H1 (cell line): ENCODE measurements at regions of chr1 and their contacts with region 1.

Region 1: GRCh38 chr1:162612606-162613400 is 19.5 kb upstream of the DDR2 start:
- DNase-seq: no peak
- H3K4me3 ChIP-seq: no peak overlapping the region
- H3K27ac ChIP-seq: no peak overlapping the region
- H3K4me1 ChIP-seq: no peaks in the 10 kb centered on the region
- H3K27me3 ChIP-seq: no peaks in the 10 kb centered on the region
- CTCF ChIP-seq: no peak
- EP300 ChIP-seq: no peak
- POLR2A ChIP-seq: no peak
- RAD21 ChIP-seq: no peak

Region 2: GRCh38 chr1:162599451-162599850 is 13.4 kb before region 1 on chr1:
- CTCF ChIA-PET with region 1: interaction called, 28 read pairs
- POLR2A ChIA-PET with region 1: interaction called, 4 read pairs
- DNase-seq: no peak
- H3K4me3 ChIP-seq: no peak overlapping the region
- H3K27ac ChIP-seq: no peak overlapping the region
- H3K4me1 ChIP-seq: no peaks in the 10 kb centered on the region
- H3K27me3 ChIP-seq: no peaks in the 10 kb centered on the region
- CTCF ChIP-seq: no peak
- EP300 ChIP-seq: no peak
- POLR2A ChIP-seq: no peak
- RAD21 ChIP-seq: no peak

Region 3: DNA sequence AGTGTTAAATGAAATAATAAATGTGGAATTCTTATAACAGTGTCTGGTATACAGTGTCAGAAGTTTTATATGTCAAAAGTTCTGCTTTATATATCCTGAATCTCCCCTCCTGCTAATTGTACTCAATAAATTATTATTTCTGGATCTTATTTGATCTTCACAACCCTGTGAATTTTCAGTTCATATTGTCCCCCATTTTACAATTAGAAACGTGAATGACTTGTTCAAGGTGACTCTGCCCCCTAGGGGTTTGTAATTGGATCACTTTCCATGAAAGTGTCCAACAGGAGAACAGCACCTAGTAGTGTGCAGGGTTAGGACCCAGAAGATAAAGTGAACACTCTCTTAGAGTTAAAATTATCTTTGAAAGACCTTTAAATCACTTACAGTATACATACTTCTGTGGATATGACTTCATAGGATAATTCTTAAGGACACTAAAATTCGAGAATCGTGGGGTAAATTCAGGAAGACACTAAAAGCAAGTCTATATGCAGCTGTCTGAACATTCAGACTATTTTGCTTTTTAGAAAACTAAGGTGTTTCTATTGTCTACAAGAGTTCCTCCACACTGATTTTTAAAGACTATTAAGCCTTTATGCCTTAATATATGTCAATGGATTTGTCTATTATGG is 15.0 kb after region 1 on chr1:
- CTCF ChIA-PET with region 1: interaction called, 47 read pairs
- POLR2A ChIA-PET with region 1: no interaction called
- DNase-seq: no peak
- H3K4me3 ChIP-seq: no peak overlapping the region
- H3K27ac ChIP-seq: no peak overlapping the region
- H3K4me1 ChIP-seq: no peaks in the 10 kb centered on the region
- H3K27me3 ChIP-seq: no peaks in the 10 kb centered on the region
- CTCF ChIP-seq: peak in 2 of 3 experiments; percentile 22 to 46; a peak in 2 of 4 replicates
- EP300 ChIP-seq: no peak
- POLR2A ChIP-seq: no peak
- RAD21 ChIP-seq: peak; percentile 47 to 51

Region 4: DNA sequence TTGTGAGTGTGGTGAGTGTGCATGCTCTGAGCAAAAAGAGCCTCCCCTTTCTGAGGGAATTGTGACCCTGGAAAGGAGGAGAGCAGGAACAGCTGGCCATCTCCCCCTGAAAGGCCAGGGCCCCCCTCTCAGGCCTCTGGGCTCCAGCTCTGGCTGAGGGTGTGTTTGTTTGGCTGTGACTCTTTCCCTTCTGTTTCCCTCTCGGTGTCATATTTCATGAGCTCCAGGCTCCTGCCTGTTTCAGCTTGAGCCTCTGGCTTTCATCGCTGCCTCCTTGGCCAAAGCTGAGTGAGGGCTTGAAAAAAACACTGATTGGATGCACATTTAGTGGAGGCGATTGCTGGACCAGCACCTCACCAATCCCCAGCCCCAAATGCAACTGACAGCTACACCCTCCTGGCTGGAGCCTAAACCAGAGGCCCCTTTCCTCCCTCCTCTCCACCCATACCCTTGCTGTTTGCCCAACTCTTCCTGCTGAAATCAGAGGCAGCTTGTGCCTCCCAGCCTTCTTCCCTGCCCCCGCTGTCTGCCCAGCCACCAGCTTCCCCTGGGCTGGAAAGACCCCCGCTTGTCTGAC is 83.6 kb after region 1 on chr1:
- CTCF ChIA-PET with region 1: interaction called, 19 read pairs
- POLR2A ChIA-PET with region 1: interaction called, 3 read pairs
- DNase-seq: peak; percentile 47 to 67
- H3K4me3 ChIP-seq: peak overlapping the region in 2 of 4 experiments; percentile 4 to 39; a peak in 3 of 8 replicates
- H3K27ac ChIP-seq: peak overlapping the region; percentile 68; the same call in 1 of the 2 replicates
- H3K4me1 ChIP-seq: peaks cover 1 to 13% (median 8%) of the 10 kb centered on the region in 4 experiments; a peak in 6 of 7 replicates
- H3K27me3 ChIP-seq: no peaks in the 10 kb centered on the region
- CTCF ChIP-seq: no peak
- EP300 ChIP-seq: no peak
- POLR2A ChIP-seq: peak in 1 of 2 experiments; percentile 47; a peak in 1 of 3 replicates
- RAD21 ChIP-seq: no peak; a peak in 1 of 4 replicates